ENCODE measurements at regions of chr5 and their contacts with region 1.

Region 1: GRCh38 chr5:133364936-133365707 is 247.2 kb downstream of the FSTL4 start:
- DNase-seq: peak; percentile 36
- ATAC-seq: no peak
- H3K4me3 Mint-ChIP-seq: no peak overlapping the region
- H3K27ac Mint-ChIP-seq: no peak overlapping the region
- H3K4me1 Mint-ChIP-seq: no peaks in the 10 kb centered on the region
- H3K27me3 Mint-ChIP-seq: no peaks in the 10 kb centered on the region

Region 2: DNA sequence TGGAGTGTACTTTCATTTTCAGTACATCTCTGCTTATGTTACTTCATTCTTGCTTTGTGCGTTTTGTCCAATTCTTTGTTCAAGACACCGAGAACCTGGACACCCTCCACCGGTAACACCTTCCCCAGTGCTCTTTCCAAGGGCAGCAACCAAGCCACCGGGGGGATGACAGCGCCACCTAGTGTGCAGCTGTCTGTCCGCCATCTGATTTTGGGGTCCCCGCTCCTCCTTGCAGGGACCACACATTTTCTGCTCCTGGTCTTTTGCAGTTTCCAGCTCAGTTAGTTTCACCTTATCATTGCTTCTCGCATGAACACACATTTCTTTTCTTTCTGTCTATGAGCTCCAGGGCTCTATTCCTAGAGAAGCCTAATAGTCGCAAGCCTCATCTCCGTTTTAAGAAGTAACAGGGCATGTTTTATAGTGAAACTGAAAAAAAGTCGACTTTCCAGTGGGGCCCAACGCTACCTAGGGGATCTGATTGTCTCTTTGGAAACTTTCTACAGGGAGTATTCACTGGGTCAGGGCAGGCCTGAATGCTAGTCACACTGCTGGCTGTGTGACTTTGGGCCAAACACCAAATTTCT is 95.1 kb after region 1 on chr5:
- CTCF ChIA-PET with region 1: no interaction called
- POLR2A ChIA-PET with region 1: no interaction called
- intact Hi-C with region 1: loop called in 1 of 2 experiments (anchors 5 kb)
- DNase-seq: peak; percentile 74
- ATAC-seq: peak; percentile 49
- H3K4me3 Mint-ChIP-seq: no peak overlapping the region
- H3K27ac Mint-ChIP-seq: no peak overlapping the region
- H3K4me1 Mint-ChIP-seq: peaks cover 4% of the 10 kb centered on the region
- H3K27me3 Mint-ChIP-seq: no peaks in the 10 kb centered on the region

Region 3: GRCh38 chr5:133853646-133854365 is 488.7 kb after region 1 on chr5:
- CTCF ChIA-PET with region 1: no interaction called
- POLR2A ChIA-PET with region 1: no interaction called
- intact Hi-C with region 1: no loop called
- DNase-seq: no peak
- ATAC-seq: no peak
- H3K4me3 Mint-ChIP-seq: no peak overlapping the region
- H3K27ac Mint-ChIP-seq: no peak overlapping the region
- H3K4me1 Mint-ChIP-seq: peaks cover 2% of the 10 kb centered on the region
- H3K27me3 Mint-ChIP-seq: peaks cover 7% of the 10 kb centered on the region

Measured in activated CD4-positive, alpha-beta T cell treated with anti-CD3 and anti-CD28 coated beads for 36 hours (primary cell).